Activated CD4-positive, alpha-beta memory T cell treated with anti-CD3 and anti-CD28 coated beads for 36 hours (primary cell): ENCODE measurements at regions of chr17 and their contacts with region 1.

Region 1: DNA sequence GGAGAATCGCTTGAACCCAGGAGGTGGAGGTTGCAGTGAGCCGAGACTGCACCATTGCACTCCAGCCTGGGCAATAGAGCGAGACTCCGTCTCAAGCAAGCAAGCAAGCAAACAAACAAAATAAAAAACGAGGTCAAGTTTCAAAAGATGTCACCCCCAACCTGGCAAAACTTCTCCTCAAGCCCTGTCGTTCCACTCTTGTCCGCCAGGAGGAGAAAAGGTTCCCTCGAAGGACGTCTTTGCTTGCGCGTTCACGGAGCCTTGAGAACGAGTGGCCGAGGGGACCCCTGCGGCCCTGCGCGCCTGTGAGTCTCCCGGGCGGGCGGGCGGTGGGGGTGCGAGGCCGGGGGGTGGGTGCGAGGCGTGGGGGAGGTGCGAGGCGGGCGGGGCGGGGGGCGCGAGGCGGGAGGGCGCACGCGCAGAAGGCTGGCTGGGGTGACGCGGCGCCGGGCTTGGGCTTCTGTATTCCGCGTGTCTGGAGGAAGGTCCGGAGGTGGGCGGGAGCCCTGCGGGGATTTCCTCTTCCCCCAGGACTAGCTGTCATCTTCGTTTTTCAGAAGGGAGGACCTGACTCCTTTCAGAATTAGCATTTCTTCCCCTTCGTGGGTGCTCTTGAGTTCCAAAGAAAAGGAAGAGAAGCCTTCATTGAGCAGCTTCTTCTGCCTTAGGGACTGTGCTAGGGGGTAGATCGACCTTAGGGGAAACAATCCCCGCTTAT is 3.7 kb downstream of the SLC52A1 start:
- DNase-seq: peak; percentile 90
- H3K4me3 Mint-ChIP-seq: peak overlapping the region; percentile 68
- H3K27ac Mint-ChIP-seq: peak overlapping the region; percentile 87
- H3K4me1 Mint-ChIP-seq: peaks cover 16% of the 10 kb centered on the region
- H3K27me3 Mint-ChIP-seq: no peaks in the 10 kb centered on the region

Region 2: GRCh38 chr17:4967539-4968165 is 63.9 kb before region 1 on chr17 and contains the start of gene SPAG7:
- CTCF ChIA-PET with region 1: interaction called, 3 read pairs
- POLR2A ChIA-PET with region 1: interaction called, 3 read pairs
- intact Hi-C with region 1: loop called (anchors 5 kb)
- DNase-seq: peak; percentile 96
- H3K4me3 Mint-ChIP-seq: no peak within 1 kb of the TSS
- H3K27ac Mint-ChIP-seq: no peak within 1 kb of the TSS
- H3K4me1 Mint-ChIP-seq: peaks cover 37% of the 10 kb centered on the region
- H3K27me3 Mint-ChIP-seq: no peaks in the 10 kb centered on the region
- total RNA-seq, gene SPAG7: 60.6 to 65.8 TPM

Region 3: GRCh38 chr17:4997302-4998026 is 34.1 kb before region 1 on chr17 and contains the starts of genes INCA1 and KIF1C:
- CTCF ChIA-PET with region 1: interaction called, 8 read pairs
- POLR2A ChIA-PET with region 1: interaction called, 3 read pairs
- intact Hi-C with region 1: loop called (anchors 5 kb)
- DNase-seq: peak; percentile 93
- H3K4me3 Mint-ChIP-seq: peak within 1 kb of the TSS; percentile 82
- H3K27ac Mint-ChIP-seq: peak within 1 kb of the TSS; percentile 42
- H3K4me1 Mint-ChIP-seq: peaks cover 20% of the 10 kb centered on the region
- H3K27me3 Mint-ChIP-seq: no peaks in the 10 kb centered on the region
- total RNA-seq, gene INCA1: 0.40 TPM in 1 of 2 experiments, not detected in the other
- total RNA-seq, gene KIF1C: 43.9 to 48.8 TPM

Region 4: GRCh38 chr17:5043524-5043923 is 12.0 kb after region 1 on chr17:
- CTCF ChIA-PET with region 1: interaction called, 11 read pairs
- POLR2A ChIA-PET with region 1: interaction called, 4 read pairs
- intact Hi-C with region 1: loop called (anchors 1 kb)
- DNase-seq: no peak
- H3K4me3 Mint-ChIP-seq: peak overlapping the region; percentile 28
- H3K27ac Mint-ChIP-seq: peak overlapping the region; percentile 58
- H3K4me1 Mint-ChIP-seq: peaks cover 53% of the 10 kb centered on the region
- H3K27me3 Mint-ChIP-seq: no peaks in the 10 kb centered on the region

Region 5: DNA sequence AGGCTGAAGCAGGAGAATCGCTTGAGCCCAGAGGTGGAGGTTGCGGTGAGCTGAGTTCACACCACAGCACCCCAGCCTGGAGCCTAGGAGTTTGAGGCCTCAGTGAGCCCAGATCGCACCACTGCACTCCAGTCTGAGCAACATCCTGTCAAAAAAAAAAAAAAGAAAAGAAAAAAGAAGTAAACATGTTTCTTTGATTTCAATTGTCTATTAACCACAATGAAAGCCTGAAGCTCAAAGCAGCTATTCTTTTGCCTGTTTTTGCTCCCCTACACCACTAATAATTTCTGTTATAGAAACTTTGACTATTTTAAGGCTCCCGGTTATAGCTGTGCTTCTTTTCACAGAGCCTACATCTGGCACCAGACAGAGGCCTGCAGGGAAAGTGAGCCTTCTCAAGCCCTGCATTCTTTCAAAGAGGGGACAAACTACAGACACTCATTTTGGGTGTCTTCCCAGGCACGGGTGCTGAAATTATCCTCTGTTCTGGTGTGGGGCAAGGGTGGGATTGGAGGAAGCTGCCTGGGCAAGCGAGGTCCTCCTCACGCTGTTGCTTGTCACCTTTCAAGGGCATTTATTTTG is 17.9 kb after region 1 on chr17:
- CTCF ChIA-PET with region 1: interaction called, 11 read pairs
- POLR2A ChIA-PET with region 1: interaction called, 4 read pairs
- intact Hi-C with region 1: loop called (anchors 1 kb)
- DNase-seq: peak; percentile 76
- H3K4me3 Mint-ChIP-seq: no peak overlapping the region
- H3K27ac Mint-ChIP-seq: peak overlapping the region; percentile 78
- H3K4me1 Mint-ChIP-seq: peaks cover 41% of the 10 kb centered on the region
- H3K27me3 Mint-ChIP-seq: no peaks in the 10 kb centered on the region

Region 6: GRCh38 chr17:5065227-5065744 is 33.8 kb after region 1 on chr17:
- CTCF ChIA-PET with region 1: interaction called, 74 read pairs
- POLR2A ChIA-PET with region 1: no interaction called
- intact Hi-C with region 1: loop called (anchors 1 kb)
- DNase-seq: no peak
- H3K4me3 Mint-ChIP-seq: no peak overlapping the region
- H3K27ac Mint-ChIP-seq: no peak overlapping the region
- H3K4me1 Mint-ChIP-seq: peaks cover 9% of the 10 kb centered on the region
- H3K27me3 Mint-ChIP-seq: no peaks in the 10 kb centered on the region

Region 7: DNA sequence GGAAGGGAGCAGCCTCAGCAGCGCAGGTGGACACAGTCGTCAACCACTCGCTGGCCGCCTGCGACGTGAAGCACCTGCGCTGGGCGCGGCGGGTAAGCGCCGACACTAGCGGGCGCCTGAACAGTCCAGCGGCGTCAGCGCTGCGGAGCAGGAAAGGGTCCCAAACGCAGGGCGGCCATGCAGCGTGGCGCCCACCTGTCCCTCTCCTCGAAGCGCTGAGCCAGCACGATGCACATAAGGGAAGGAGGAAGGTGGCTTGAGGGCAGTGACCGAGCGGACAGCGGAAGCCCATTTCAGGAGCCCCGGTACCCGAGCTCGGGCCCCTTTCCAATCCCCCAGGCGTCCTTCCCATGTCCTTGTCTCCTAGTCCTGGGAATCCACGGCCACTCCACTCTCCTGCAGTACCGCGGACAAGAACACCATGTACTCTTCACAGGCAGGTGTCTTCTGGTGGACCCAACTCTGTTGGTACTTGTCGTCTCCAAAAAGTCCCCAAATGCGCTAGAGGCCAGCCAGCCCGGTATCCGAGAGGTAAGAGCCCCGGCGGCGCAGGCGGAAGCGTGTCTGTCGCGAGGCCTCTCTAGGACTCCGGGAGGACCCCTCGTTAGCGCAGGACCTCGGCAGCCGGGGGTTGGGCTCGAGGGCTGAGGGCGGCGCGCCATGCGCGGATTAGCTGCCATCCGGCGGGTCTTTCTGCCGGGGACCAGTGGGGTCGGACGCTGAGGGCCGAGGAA is 65.7 kb after region 1 on chr17:
- CTCF ChIA-PET with region 1: no interaction called
- POLR2A ChIA-PET with region 1: no interaction called
- intact Hi-C with region 1: no loop called
- DNase-seq: peak; percentile 33
- H3K4me3 Mint-ChIP-seq: peak overlapping the region; percentile 53
- H3K27ac Mint-ChIP-seq: no peak overlapping the region
- H3K4me1 Mint-ChIP-seq: peaks cover 7% of the 10 kb centered on the region
- H3K27me3 Mint-ChIP-seq: peaks cover 16% of the 10 kb centered on the region

Region 8: DNA sequence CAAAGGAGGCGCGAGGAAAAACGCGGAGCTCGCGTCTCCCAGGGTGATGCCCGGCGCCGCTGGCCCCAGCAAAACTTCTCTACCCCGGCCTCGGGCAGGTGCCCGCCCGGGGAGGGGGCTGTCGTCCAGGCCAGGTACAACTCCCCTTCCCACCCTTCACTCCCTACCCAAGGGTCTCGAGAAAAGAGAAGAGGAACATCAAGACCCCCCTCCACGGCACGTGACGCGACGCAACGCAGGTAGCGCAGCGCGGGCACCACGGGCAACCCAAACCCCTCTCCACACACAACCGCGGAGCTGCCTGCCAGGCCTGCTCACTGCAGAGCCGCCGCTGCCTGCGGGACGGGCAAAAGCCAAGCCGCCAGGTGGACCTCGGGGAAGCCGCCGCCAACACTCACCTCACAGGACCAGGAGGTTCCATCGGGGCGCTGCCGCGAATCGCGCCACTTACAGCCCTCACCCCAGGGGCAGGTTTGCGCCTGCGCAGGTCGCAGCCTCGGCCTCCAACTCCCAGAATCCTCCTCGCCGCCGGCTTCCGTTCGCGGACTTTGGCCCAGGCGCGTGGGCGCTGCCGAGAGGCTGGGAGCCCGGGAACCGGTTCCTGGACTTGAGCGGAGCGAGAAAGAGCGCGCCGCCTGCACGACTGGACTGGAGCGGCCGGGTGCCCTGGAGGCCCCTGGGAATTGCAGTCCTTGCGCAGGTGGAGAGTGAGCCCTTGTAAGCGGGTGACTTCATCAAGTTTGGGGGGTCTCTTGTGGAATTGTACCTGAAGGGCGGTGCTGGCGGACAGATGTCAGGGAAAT is 80.1 kb after region 1 on chr17 and contains the start of gene ZNF232:
- CTCF ChIA-PET with region 1: no interaction called
- POLR2A ChIA-PET with region 1: interaction called, 4 read pairs
- intact Hi-C with region 1: loop called (anchors 2 kb)
- DNase-seq: peak; percentile 96
- H3K4me3 Mint-ChIP-seq: peak within 1 kb of the TSS; percentile 78
- H3K27ac Mint-ChIP-seq: peak within 1 kb of the TSS; percentile 35
- H3K4me1 Mint-ChIP-seq: peaks cover 27% of the 10 kb centered on the region
- H3K27me3 Mint-ChIP-seq: peaks cover 14% of the 10 kb centered on the region
- total RNA-seq, gene ZNF232: 13.6 to 14.2 TPM